ENCODE measurements at regions of chr10 and their contacts with region 1.

Region 1: DNA sequence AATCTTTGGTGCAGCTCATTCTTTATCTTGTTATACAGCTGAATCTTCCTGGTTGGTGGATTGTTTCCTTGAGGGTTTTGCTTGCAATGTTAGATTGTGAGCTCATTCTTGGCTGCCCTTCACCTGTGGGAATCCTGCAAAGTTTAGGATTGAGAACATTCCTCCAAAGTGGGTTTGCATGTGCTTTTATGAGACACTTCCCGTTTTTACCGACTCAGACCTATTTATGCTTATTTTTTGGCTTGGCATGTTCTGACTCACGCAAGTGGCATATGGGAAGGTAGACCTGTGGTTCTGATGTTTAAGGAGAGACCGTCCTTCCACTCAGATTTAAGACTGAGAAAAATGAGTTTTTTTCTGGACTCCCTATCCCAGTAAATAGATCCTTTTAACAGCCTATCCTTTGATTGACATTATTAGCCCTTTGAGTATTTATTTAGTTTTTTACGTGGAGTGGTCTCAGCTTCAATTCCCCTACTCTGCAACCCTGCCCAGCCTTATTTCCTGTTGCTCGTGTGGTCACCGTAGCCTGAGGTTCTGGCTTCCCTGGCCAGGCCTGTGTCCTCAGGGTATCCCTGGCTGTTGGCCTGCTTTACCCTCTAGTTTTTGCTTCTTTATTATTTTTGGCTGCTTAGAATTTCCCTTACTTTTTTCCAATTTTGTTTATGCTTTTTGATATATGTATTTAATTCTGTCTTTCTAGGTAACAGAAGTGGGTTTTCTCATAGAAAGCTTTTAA is 13.4 kb upstream of the PRF1 start:
- DNase-seq: no peak
- ATAC-seq: no peak
- H3K4me3 ChIP-seq: no peak overlapping the region
- H3K4me3 Mint-ChIP-seq: no peak overlapping the region
- H3K27ac ChIP-seq: peak overlapping the region; percentile 12
- H3K27ac Mint-ChIP-seq: peak overlapping the region; percentile 55 to 75
- H3K4me1 ChIP-seq: peaks cover 0 to 31% of the 10 kb centered on the region in 2 experiments
- H3K4me1 Mint-ChIP-seq: peaks cover 24 to 46% (median 25%) of the 10 kb centered on the region in 3 donors
- H3K27me3 ChIP-seq: no peaks in the 10 kb centered on the region
- H3K27me3 Mint-ChIP-seq: peaks cover 0 to 3% of the 10 kb centered on the region in 2 donors

Region 2: GRCh38 chr10:70555371-70555770 is 60.6 kb before region 1 on chr10:
- CTCF ChIA-PET with region 1: interaction called, 4 to 12 read pairs
- POLR2A ChIA-PET with region 1: no interaction called
- DNase-seq: no peak
- ATAC-seq: no peak
- H3K4me3 ChIP-seq: no peak overlapping the region
- H3K4me3 Mint-ChIP-seq: no peak overlapping the region
- H3K27ac ChIP-seq: no peak overlapping the region
- H3K27ac Mint-ChIP-seq: no peak overlapping the region
- H3K4me1 ChIP-seq: peaks cover 0 to 16% of the 10 kb centered on the region in 2 experiments
- H3K4me1 Mint-ChIP-seq: peaks cover 10 to 17% (median 16%) of the 10 kb centered on the region in 3 donors
- H3K27me3 ChIP-seq: no peaks in the 10 kb centered on the region
- H3K27me3 Mint-ChIP-seq: no peaks in the 10 kb centered on the region

Region 3: GRCh38 chr10:70652761-70653657 is 37.1 kb after region 1 on chr10:
- CTCF ChIA-PET with region 1: interaction called in 1 of 2 experiments, 3 read pairs
- POLR2A ChIA-PET with region 1: interaction called in 1 of 2 experiments, 10 read pairs
- DNase-seq: no peak
- ATAC-seq: no peak
- H3K4me3 ChIP-seq: no peak overlapping the region
- H3K4me3 Mint-ChIP-seq: no peak overlapping the region
- H3K27ac ChIP-seq: no peak overlapping the region
- H3K27ac Mint-ChIP-seq: no peak overlapping the region
- H3K4me1 ChIP-seq: peaks cover 0 to 4% of the 10 kb centered on the region in 2 experiments
- H3K4me1 Mint-ChIP-seq: peaks cover 0 to 8% (median 0%) of the 10 kb centered on the region in 3 donors
- H3K27me3 ChIP-seq: peaks cover 0 to 9% of the 10 kb centered on the region in 2 experiments
- H3K27me3 Mint-ChIP-seq: peaks cover 0 to 3% of the 10 kb centered on the region in 2 donors